Vagina (tissue), 2 donors: ENCODE measurements at regions of chr16 and their contacts with region 1.

Region 1: DNA sequence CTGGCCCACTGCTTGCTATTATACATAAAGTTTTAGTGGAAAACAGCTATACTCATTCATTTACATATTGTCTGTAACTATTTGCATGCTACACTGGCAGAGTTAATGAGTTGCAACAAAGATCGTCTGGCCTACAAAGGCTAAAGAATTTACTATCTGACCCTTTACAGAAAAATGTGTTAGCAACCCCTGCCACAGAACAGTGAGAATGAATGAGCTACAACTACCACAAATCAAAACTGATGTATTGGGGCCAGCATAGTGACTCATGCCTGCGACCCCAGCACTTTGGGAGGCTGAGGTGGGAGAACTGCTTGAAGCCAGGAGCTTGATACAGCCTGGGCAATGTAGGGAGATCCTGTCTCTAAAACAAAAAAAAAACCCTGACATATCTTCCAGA is 92.7 kb downstream of the MYH11 start:
- DNase-seq: no peak
- H3K4me3 ChIP-seq: no peak overlapping the region
- H3K27ac ChIP-seq: no peak overlapping the region
- H3K4me1 ChIP-seq: no peaks in the 10 kb centered on the region
- H3K27me3 ChIP-seq: no peaks in the 10 kb centered on the region
- CTCF ChIP-seq: no peak
- POLR2A ChIP-seq: no peak

Region 2: GRCh38 chr16:14473488-14473887 is 1290.6 kb before region 1 on chr16:
- intact Hi-C with region 1: loop called (anchors 5 kb)
- DNase-seq: no peak
- H3K4me3 ChIP-seq: no peak overlapping the region
- H3K27ac ChIP-seq: no peak overlapping the region
- H3K4me1 ChIP-seq: peaks cover 5% of the 10 kb centered on the region
- H3K27me3 ChIP-seq: no peaks in the 10 kb centered on the region
- CTCF ChIP-seq: no peak
- POLR2A ChIP-seq: no peak

Region 3: DNA sequence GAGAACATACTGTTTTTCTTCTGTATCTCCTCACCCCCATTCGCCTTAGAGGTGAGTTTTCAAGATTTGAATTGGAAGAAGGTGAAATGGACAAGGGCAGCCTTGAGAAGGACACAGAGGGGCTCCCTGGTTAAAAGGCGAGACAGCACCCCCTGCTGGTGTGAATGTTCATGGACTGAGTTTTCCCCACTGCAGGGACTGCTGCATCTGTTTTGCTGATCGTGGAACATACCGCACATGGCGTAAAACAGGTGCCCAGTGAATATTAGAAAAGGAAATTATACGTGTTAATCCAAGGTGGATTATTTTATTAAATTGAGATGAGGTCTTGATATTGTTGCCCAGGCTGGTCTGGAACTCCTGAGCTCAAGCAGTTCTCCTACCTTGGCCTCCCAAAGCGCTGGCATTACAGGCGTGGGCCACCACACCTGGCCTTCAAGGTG is 59.5 kb before region 1 on chr16:
- intact Hi-C with region 1: no loop called
- DNase-seq: no peak
- H3K4me3 ChIP-seq: no peak overlapping the region
- H3K27ac ChIP-seq: no peak overlapping the region
- H3K4me1 ChIP-seq: peaks cover 6% of the 10 kb centered on the region
- H3K27me3 ChIP-seq: no peaks in the 10 kb centered on the region
- CTCF ChIP-seq: peak; percentile 61 to 73 (median 62)
- POLR2A ChIP-seq: no peak

Region 4: DNA sequence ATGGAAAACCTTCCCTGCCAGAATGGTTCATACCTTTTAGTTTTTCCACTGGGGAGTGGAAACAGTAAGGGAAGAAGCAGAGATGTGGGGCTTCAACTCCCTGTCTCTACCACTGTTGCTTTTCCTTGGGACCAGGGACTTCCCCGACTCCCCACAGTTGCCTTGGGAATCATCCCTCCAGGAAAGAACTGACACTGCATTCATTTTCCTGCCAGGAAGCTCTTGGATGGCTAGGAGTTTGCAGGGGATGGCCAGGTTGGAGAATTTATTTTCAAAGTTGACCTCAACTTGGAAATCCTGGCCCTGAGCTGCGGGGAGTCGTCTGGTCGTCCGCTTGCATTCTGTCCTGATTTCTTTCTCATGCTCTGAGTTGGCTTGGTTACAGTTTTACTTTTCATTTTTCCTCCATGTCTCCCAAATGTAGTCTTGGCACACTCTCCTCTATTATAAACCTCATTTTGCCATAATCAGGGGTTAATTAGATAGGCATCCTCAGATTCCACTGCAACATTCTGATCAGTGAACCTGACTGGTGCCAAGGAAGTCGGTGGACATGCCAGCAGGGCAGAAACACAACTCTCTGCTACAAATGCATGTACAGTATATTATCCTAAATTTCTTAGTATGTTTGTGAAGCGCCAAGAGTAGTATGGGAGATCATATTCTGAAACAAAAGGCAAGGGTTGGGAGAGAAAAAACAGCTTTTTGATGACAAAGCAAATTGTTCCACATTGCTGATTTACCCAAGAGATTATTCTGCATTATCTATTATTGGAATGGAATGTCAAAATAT is 1927.2 kb after region 1 on chr16:
- intact Hi-C with region 1: no loop called
- DNase-seq: no peak
- H3K4me3 ChIP-seq: no peak overlapping the region
- H3K27ac ChIP-seq: no peak overlapping the region
- H3K4me1 ChIP-seq: no peaks in the 10 kb centered on the region
- H3K27me3 ChIP-seq: no peaks in the 10 kb centered on the region
- CTCF ChIP-seq: no peak
- POLR2A ChIP-seq: no peak